Ascending aorta (tissue), 2 donors: ENCODE measurements at regions of chr21 and their contacts with region 1.

Region 1: DNA sequence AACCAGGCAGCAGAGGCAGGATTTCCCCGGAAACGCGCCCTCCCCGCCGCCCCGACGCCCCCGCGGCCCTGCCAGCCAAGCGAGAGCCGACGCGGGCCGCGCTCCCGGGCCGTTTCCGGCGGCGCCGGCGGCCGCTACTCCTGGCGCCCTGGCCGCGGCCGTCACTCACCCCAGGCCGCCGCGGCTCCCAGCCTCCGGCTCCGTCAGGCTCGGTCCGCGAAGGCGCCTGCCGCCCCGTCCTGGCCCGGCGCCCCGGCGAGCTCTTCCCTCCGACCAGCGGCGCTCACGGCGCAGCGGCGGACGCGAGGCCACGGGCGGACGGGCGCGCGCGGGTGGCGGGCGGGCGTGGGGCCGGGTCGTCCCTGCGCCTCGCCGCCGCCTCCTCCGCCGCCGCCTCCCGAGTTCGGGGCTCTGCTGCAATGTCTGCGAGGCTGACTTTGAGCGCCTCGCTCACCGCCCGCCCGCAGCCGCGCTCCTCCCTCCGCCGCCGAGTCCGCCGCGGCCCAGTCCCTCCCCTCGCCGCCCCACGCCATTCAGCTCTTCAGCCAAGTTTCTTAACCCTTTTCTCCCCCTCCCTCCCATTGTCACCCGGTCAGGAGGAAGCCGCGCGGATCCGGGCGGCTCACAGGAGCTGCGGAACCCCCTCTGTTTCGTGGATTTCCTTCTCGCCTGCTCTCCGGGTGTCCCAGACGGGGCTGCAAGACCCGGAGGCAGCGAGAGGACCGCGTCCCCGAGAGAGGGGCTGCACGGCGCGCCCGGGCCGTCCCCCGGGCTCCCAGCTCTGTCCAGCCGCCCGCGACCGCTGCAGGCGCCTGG is at the start of gene NRIP1:
- DNase-seq: peak; percentile 36 to 92
- H3K4me3 ChIP-seq: peak within 1 kb of the TSS; percentile 80 to 97
- H3K27ac ChIP-seq: peak within 1 kb of the TSS; percentile 93 to 95
- H3K4me1 ChIP-seq: peaks cover 0 to 25% of the 10 kb centered on the region in 2 donors
- H3K27me3 ChIP-seq: no peaks in the 10 kb centered on the region
- CTCF ChIP-seq: no peak
- total RNA-seq, gene NRIP1: 4.8 TPM

Region 2: DNA sequence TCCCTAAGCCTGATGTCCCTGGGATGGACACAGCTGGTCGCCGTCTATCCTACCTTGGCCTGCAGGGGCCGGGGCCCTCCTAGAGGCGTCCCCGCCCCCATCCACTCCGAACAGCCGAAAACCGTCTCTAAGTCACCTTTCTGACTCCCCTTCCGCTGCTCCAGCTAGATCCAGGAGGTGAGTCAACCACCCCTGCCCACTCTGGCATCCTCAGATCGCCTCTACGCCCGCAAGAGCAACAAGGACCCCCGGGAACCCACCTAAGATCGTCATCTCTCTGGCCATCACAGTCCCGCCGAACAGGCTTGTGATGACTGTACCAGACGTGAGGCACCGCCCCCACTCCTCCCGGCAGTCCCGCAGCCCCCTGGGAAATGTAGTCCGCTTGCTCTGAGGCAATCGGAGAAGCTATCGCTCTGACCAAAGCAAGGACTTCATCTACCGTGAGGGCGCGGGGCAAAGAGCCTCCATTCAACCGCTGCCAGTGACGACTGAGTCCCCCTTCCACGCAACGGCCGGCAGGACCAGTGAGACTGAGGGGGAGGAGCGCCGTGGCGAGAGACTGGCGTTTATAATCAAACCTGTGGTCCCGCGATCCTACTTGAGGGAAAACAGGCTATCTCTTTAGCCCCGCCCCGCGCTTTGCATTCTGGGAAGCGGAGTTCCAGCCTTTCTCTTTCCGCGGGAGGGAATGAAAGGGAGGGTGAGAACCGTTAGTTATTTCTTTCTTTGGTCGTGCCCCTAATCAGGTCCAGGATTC is 681.8 kb before region 1 on chr21 and contains the start of gene HSPA13:
- intact Hi-C with region 1: loop called (anchors 1 kb)
- DNase-seq: peak; percentile 100
- H3K4me3 ChIP-seq: peak within 1 kb of the TSS; percentile 83 to 92
- H3K27ac ChIP-seq: peak within 1 kb of the TSS; percentile 87 to 95
- H3K4me1 ChIP-seq: peaks cover 0 to 9% of the 10 kb centered on the region in 2 donors
- H3K27me3 ChIP-seq: no peaks in the 10 kb centered on the region
- CTCF ChIP-seq: no peak
- total RNA-seq, gene HSPA13: 14.8 TPM

Region 3: DNA sequence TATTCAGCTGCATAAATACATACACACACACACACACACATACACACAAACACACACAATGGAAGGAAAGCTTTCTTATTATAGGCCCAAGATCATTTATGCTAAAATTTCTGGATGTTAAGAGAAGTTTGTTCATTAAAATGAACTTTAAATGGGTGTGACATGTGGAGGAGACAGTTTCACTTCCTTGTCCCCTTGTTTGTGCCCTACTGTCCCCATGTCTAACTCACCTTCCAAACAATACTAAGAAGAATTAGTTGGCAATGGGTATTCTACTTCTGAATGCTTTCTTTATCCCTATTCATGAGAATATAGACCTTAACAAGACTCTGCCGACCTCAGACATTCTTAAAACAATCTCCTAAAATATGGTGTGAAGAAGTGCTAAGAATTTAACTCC is 63.5 kb after region 1 on chr21:
- intact Hi-C with region 1: loop called (anchors 5 kb)
- DNase-seq: no peak
- H3K4me3 ChIP-seq: no peak overlapping the region
- H3K27ac ChIP-seq: no peak overlapping the region
- H3K4me1 ChIP-seq: peaks cover 0 to 7% of the 10 kb centered on the region in 2 donors
- H3K27me3 ChIP-seq: no peaks in the 10 kb centered on the region
- CTCF ChIP-seq: no peak

Region 4: GRCh38 chr21:15483138-15483780 is 418.5 kb after region 1 on chr21:
- intact Hi-C with region 1: loop called (anchors 10 kb)
- DNase-seq: peak; percentile 30 to 87
- H3K4me3 ChIP-seq: no peak overlapping the region
- H3K27ac ChIP-seq: no peak overlapping the region
- H3K4me1 ChIP-seq: no peaks in the 10 kb centered on the region
- H3K27me3 ChIP-seq: no peaks in the 10 kb centered on the region
- CTCF ChIP-seq: peak; percentile 61 to 87 (median 81)

Region 5: DNA sequence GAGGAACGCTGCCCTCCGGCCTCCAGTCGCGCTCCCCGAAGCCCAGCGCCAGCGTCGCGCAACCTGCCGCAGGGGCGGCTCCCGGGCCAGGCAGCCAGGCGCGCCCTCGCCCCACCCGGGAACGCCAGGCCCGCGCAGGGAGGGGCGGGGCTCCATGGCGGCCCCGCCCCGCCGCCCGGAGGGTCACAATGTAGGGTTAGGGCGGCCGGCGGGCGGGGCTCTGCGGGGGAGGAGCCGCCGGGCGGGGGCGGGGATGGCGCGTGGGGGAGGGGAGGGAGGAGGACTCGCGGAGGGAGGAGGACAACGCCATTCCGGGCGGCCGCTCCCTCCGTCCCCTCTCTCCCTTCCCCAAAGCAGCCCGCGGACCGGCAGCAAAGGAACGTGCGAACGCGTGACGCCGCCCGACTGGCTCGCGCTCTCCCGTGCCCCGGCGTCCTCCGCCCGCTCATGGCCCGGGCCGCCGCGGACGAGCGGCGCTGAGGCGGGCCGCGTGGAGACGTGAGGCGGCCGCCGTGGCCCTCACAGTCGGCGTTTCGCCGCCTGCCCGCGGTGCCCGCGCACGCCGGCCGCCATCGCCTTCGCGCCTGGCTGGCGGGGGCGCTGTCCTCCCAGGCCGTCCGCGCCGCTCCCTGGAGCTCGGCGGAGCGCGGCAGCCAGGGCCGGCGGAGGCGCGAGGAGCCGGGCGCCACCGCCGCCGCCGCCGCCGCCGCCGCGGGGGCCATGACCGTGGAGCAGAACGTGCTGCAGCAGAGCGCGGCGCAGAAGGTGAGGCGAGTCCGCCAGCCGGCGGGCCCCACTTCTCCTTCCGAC is 665.1 kb after region 1 on chr21 and contains the start of gene USP25:
- intact Hi-C with region 1: loop called (anchors 2 kb)
- DNase-seq: peak; percentile 74 to 95
- H3K4me3 ChIP-seq: peak within 1 kb of the TSS; percentile 89 to 100
- H3K27ac ChIP-seq: peak within 1 kb of the TSS; percentile 92 to 95
- H3K4me1 ChIP-seq: peaks cover 0 to 8% of the 10 kb centered on the region in 2 donors
- H3K27me3 ChIP-seq: no peaks in the 10 kb centered on the region
- CTCF ChIP-seq: peak in 1 of 3 experiments; percentile 38
- total RNA-seq, gene USP25: 29.2 TPM

Region 6: GRCh38 chr21:16588433-16588860 is 1523.7 kb after region 1 on chr21:
- intact Hi-C with region 1: loop called (anchors 10 kb)
- DNase-seq: peak; percentile 20 to 81
- H3K4me3 ChIP-seq: peak overlapping the region; percentile 51 to 68
- H3K27ac ChIP-seq: peak overlapping the region; percentile 69 to 73
- H3K4me1 ChIP-seq: peaks cover 0 to 8% of the 10 kb centered on the region in 2 donors
- H3K27me3 ChIP-seq: no peaks in the 10 kb centered on the region
- CTCF ChIP-seq: no peak